Psoas muscle (tissue), 8 donors: ENCODE measurements at regions of chr10 and their contacts with region 1.

Region 1: GRCh38 chr10:47374611-47375536 is 9.2 kb downstream of the ZNF488 start:
- DNase-seq: peak in 1 of 2 donors; percentile 42
- ATAC-seq: no peak
- H3K4me3 ChIP-seq: no peak overlapping the region
- H3K27ac ChIP-seq: no peak overlapping the region
- H3K4me1 ChIP-seq: peaks cover 3% of the 10 kb centered on the region
- H3K27me3 ChIP-seq: peaks cover 0 to 11% (median 0%) of the 10 kb centered on the region in 3 donors
- CTCF ChIP-seq: no peak

Region 2: GRCh38 chr10:48358162-48358561 is 983.3 kb after region 1 on chr10:
- intact Hi-C with region 1: loop called in 1 of 2 experiments (anchors 5 kb)
- DNase-seq: no peak
- ATAC-seq: no peak
- H3K4me3 ChIP-seq: no peak overlapping the region
- H3K27ac ChIP-seq: no peak overlapping the region
- H3K4me1 ChIP-seq: peaks cover 23% of the 10 kb centered on the region
- H3K27me3 ChIP-seq: no peaks in the 10 kb centered on the region
- CTCF ChIP-seq: no peak